ENCODE measurements at regions of chr2 and their contacts with region 1.

Region 1: GRCh38 chr2:64330281-64331113 is 123.5 kb upstream of the LGALSL start:
- DNase-seq: peak; percentile 84
- ATAC-seq: peak; percentile 77
- H3K4me3 Mint-ChIP-seq: peak overlapping the region; percentile 46
- H3K27ac Mint-ChIP-seq: peak overlapping the region; percentile 86
- H3K4me1 Mint-ChIP-seq: peaks cover 61% of the 10 kb centered on the region
- H3K27me3 Mint-ChIP-seq: no peaks in the 10 kb centered on the region; the same call in 1 of the 2 replicates
- CTCF ChIP-seq: peak; percentile 83

Region 2: GRCh38 chr2:64062829-64063228 is 267.7 kb before region 1 on chr2:
- CTCF ChIA-PET with region 1: interaction called, 12 read pairs
- POLR2A ChIA-PET with region 1: no interaction called
- DNase-seq: no peak
- ATAC-seq: no peak
- H3K4me3 Mint-ChIP-seq: no peak overlapping the region
- H3K27ac Mint-ChIP-seq: peak overlapping the region; percentile 14; the same call in 1 of the 2 replicates
- H3K4me1 Mint-ChIP-seq: peaks cover 50% of the 10 kb centered on the region
- H3K27me3 Mint-ChIP-seq: no peaks in the 10 kb centered on the region
- CTCF ChIP-seq: no peak

Region 3: DNA sequence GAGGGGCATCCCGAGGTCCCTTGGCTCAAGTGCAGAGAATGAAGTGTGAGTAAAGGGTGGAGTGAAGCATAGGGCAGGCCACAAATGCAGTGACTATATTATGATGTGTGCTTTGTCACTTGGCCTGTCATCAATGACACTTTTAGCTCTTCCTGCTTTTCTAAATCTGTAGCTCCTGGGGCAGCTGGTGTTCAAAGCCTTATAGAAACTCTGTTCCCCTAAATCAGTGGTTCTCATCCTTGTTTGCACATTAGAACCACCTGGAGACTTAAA is 12.1 kb before region 1 on chr2:
- CTCF ChIA-PET with region 1: interaction called, 27 read pairs
- POLR2A ChIA-PET with region 1: no interaction called
- DNase-seq: no peak
- ATAC-seq: no peak
- H3K4me3 Mint-ChIP-seq: no peak overlapping the region
- H3K27ac Mint-ChIP-seq: no peak overlapping the region
- H3K4me1 Mint-ChIP-seq: peaks cover 15% of the 10 kb centered on the region
- H3K27me3 Mint-ChIP-seq: peaks cover 10% of the 10 kb centered on the region
- CTCF ChIP-seq: no peak

Region 4: GRCh38 chr2:64474121-64474571 is 143.6 kb after region 1 on chr2:
- CTCF ChIA-PET with region 1: interaction called, 19 read pairs
- POLR2A ChIA-PET with region 1: no interaction called
- DNase-seq: no peak
- ATAC-seq: peak; percentile 54
- H3K4me3 Mint-ChIP-seq: no peak overlapping the region
- H3K27ac Mint-ChIP-seq: peak overlapping the region; percentile 81
- H3K4me1 Mint-ChIP-seq: peaks cover 32% of the 10 kb centered on the region
- H3K27me3 Mint-ChIP-seq: no peaks in the 10 kb centered on the region
- CTCF ChIP-seq: no peak

Region 5: GRCh38 chr2:64504774-64505720 is 174.6 kb after region 1 on chr2:
- CTCF ChIA-PET with region 1: interaction called, 10 read pairs
- POLR2A ChIA-PET with region 1: no interaction called
- DNase-seq: no peak
- ATAC-seq: no peak
- H3K4me3 Mint-ChIP-seq: no peak overlapping the region
- H3K27ac Mint-ChIP-seq: no peak overlapping the region
- H3K4me1 Mint-ChIP-seq: no peaks in the 10 kb centered on the region
- H3K27me3 Mint-ChIP-seq: no peaks in the 10 kb centered on the region
- CTCF ChIP-seq: no peak

Region 6: GRCh38 chr2:64586883-64587481 is 256.5 kb after region 1 on chr2:
- CTCF ChIA-PET with region 1: interaction called, 11 read pairs
- POLR2A ChIA-PET with region 1: no interaction called
- DNase-seq: no peak
- ATAC-seq: no peak
- H3K4me3 Mint-ChIP-seq: no peak overlapping the region
- H3K27ac Mint-ChIP-seq: no peak overlapping the region
- H3K4me1 Mint-ChIP-seq: no peaks in the 10 kb centered on the region
- H3K27me3 Mint-ChIP-seq: no peaks in the 10 kb centered on the region
- CTCF ChIP-seq: 0 out of 2 replicates have a peak, but pooled peaks have one; percentile 18

Region 7: GRCh38 chr2:64622443-64623241 is 292.1 kb after region 1 on chr2:
- CTCF ChIA-PET with region 1: interaction called, 24 read pairs
- POLR2A ChIA-PET with region 1: no interaction called
- DNase-seq: peak; percentile 32
- ATAC-seq: peak; percentile 51
- H3K4me3 Mint-ChIP-seq: no peak overlapping the region
- H3K27ac Mint-ChIP-seq: peak overlapping the region; percentile 88; the same call in 1 of the 2 replicates
- H3K4me1 Mint-ChIP-seq: peaks cover 50% of the 10 kb centered on the region
- H3K27me3 Mint-ChIP-seq: peaks cover 6% of the 10 kb centered on the region
- CTCF ChIP-seq: no peak

Region 8: GRCh38 chr2:64675860-64676259 is 345.4 kb after region 1 on chr2:
- CTCF ChIA-PET with region 1: no interaction called
- POLR2A ChIA-PET with region 1: no interaction called
- DNase-seq: no peak
- ATAC-seq: no peak
- H3K4me3 Mint-ChIP-seq: no peak overlapping the region
- H3K27ac Mint-ChIP-seq: no peak overlapping the region
- H3K4me1 Mint-ChIP-seq: peaks cover 18% of the 10 kb centered on the region
- H3K27me3 Mint-ChIP-seq: no peaks in the 10 kb centered on the region
- CTCF ChIP-seq: no peak